B cell (primary cell): ENCODE measurements at regions of chr19 and their contacts with region 1.

Region 1: DNA sequence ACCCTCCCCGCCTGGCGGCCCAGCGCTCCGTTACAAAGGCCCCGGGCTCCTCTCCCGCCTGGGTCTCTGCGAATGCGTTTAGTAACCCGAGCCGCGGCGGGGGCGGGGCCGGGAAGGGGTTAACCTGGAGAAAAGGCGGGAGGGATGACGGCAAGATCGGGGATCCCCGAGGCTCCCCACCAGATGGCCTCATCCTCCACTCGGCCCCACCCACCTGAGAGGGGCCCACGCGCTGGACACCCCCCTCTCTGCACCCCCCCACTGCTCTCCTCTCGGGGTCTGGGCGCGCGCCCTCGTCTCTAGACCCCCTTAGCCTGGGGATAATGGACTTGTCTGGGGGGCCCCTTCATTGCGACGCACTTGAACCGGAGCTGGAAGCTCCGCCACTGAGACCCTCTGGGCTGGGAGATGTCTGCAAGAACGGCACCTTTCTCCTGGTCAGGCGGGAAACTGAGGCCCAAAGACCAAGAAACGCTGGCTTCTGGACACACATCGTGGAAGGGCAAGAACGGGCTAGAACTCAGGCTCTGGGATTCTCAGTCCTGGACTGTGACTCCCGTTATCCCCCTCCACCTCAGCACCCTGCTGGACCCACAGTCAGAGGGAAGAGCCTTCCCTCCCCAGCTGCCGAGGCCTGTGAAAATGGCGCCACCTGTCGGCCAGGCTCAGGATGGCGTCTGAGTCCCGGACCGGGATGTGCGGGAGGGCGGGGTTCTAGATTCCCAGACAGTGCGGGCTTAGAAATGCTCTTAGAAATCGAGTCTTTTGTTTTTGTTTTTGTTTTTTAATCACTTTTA is 2.9 kb upstream of the LTBP4 start:
- DNase-seq: peak; percentile 87
- ATAC-seq: peak; percentile 60
- H3K4me3 ChIP-seq: no peak overlapping the region
- H3K4me3 Mint-ChIP-seq: peak overlapping the region; percentile 61
- H3K27ac ChIP-seq: no peak overlapping the region
- H3K27ac Mint-ChIP-seq: peak overlapping the region; percentile 32
- H3K4me1 ChIP-seq: peaks cover 59 to 65% of the 10 kb centered on the region in 2 donors
- H3K4me1 Mint-ChIP-seq: peaks cover 45% of the 10 kb centered on the region
- H3K27me3 ChIP-seq: peaks cover 0 to 69% (median 40%) of the 10 kb centered on the region in 4 experiments
- H3K27me3 Mint-ChIP-seq: peaks cover 35% of the 10 kb centered on the region
- CTCF ChIP-seq: peak; percentile 98

Region 2: GRCh38 chr19:40285353-40286234 is 312.7 kb before region 1 on chr19:
- CTCF ChIA-PET with region 1: no interaction called
- POLR2A ChIA-PET with region 1: no interaction called
- intact Hi-C with region 1: no loop called
- DNase-seq: peak; percentile 100
- ATAC-seq: peak; percentile 74
- H3K4me3 ChIP-seq: peak overlapping the region in 4 of 5 experiments; percentile 68 to 89 (median 78)
- H3K4me3 Mint-ChIP-seq: peak overlapping the region; percentile 87
- H3K27ac ChIP-seq: peak overlapping the region; percentile 99 to 100
- H3K27ac Mint-ChIP-seq: peak overlapping the region; percentile 97
- H3K4me1 ChIP-seq: peaks cover 40 to 54% of the 10 kb centered on the region in 2 donors
- H3K4me1 Mint-ChIP-seq: peaks cover 53% of the 10 kb centered on the region
- H3K27me3 ChIP-seq: no peaks in the 10 kb centered on the region
- H3K27me3 Mint-ChIP-seq: no peaks in the 10 kb centered on the region
- CTCF ChIP-seq: no peak

Region 3: GRCh38 chr19:40305403-40305802 is 292.9 kb before region 1 on chr19:
- CTCF ChIA-PET with region 1: interaction called, 32 read pairs
- POLR2A ChIA-PET with region 1: no interaction called
- intact Hi-C with region 1: no loop called
- DNase-seq: peak; percentile 84
- ATAC-seq: peak; percentile 68
- H3K4me3 ChIP-seq: no peak overlapping the region
- H3K4me3 Mint-ChIP-seq: no peak overlapping the region
- H3K27ac ChIP-seq: no peak overlapping the region
- H3K27ac Mint-ChIP-seq: no peak overlapping the region
- H3K4me1 ChIP-seq: peaks cover 0 to 3% of the 10 kb centered on the region in 2 donors
- H3K4me1 Mint-ChIP-seq: peaks cover 2% of the 10 kb centered on the region
- H3K27me3 ChIP-seq: no peaks in the 10 kb centered on the region
- H3K27me3 Mint-ChIP-seq: no peaks in the 10 kb centered on the region
- CTCF ChIP-seq: peak; percentile 88

Region 4: GRCh38 chr19:40502647-40503319 is 95.5 kb before region 1 on chr19:
- CTCF ChIA-PET with region 1: no interaction called
- POLR2A ChIA-PET with region 1: no interaction called
- intact Hi-C with region 1: no loop called
- DNase-seq: no peak
- ATAC-seq: no peak
- H3K4me3 ChIP-seq: no peak overlapping the region
- H3K4me3 Mint-ChIP-seq: no peak overlapping the region
- H3K27ac ChIP-seq: no peak overlapping the region
- H3K27ac Mint-ChIP-seq: no peak overlapping the region
- H3K4me1 ChIP-seq: no peaks in the 10 kb centered on the region
- H3K4me1 Mint-ChIP-seq: no peaks in the 10 kb centered on the region
- H3K27me3 ChIP-seq: peaks cover 0 to 18% (median 2%) of the 10 kb centered on the region in 4 experiments
- H3K27me3 Mint-ChIP-seq: peaks cover 32% of the 10 kb centered on the region
- CTCF ChIP-seq: no peak

Region 5: DNA sequence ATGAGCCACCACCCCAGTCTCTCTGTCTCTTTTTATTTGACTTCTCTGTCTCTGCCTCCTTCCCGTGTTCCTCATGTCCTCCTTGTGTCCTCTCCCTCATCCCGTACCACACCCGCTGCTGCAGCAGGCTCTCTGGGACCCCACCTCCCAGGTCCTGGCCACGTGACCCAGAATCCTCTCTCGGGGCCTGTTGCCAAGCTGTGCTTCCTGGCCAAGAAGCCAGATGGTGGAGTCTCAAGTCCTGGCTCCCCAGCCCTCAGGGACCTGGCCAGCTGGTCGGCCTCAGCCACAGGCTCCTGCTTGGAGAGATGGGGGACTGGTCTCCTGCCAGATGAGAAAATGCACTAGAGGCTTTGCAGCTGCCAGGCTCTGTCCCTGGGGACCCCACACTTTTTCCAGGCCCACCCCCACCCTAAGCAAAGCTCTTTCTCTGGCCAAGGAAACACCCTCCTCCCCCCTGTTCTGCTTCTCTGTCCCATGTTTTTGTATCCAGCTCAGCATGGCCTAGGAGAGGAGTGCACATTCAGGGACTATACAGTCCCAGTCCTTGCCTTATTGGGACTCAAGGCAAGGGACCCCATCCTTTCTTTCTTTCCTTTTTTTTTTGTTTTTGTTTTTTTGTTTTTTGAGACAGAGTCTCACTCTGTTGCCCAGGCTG is 56.0 kb before region 1 on chr19:
- CTCF ChIA-PET with region 1: interaction called, 22 read pairs
- POLR2A ChIA-PET with region 1: no interaction called
- intact Hi-C with region 1: no loop called
- DNase-seq: no peak
- ATAC-seq: no peak
- H3K4me3 ChIP-seq: no peak overlapping the region
- H3K4me3 Mint-ChIP-seq: no peak overlapping the region
- H3K27ac ChIP-seq: no peak overlapping the region
- H3K27ac Mint-ChIP-seq: no peak overlapping the region
- H3K4me1 ChIP-seq: no peaks in the 10 kb centered on the region
- H3K4me1 Mint-ChIP-seq: no peaks in the 10 kb centered on the region
- H3K27me3 ChIP-seq: peaks cover 0 to 5% (median 3%) of the 10 kb centered on the region in 4 experiments
- H3K27me3 Mint-ChIP-seq: peaks cover 14% of the 10 kb centered on the region
- CTCF ChIP-seq: no peak

Region 6: GRCh38 chr19:40576585-40577451 is 21.5 kb before region 1 on chr19 and contains the start of gene SHKBP1:
- CTCF ChIA-PET with region 1: interaction called, 11 read pairs
- POLR2A ChIA-PET with region 1: interaction called, 19 read pairs
- intact Hi-C with region 1: loop called (anchors 1 kb)
- DNase-seq: peak; percentile 96
- ATAC-seq: peak; percentile 98
- H3K4me3 ChIP-seq: peak within 1 kb of the TSS; percentile 52 to 90 (median 88)
- H3K4me3 Mint-ChIP-seq: peak within 1 kb of the TSS; percentile 83
- H3K27ac ChIP-seq: peak within 1 kb of the TSS; percentile 68 to 77
- H3K27ac Mint-ChIP-seq: peak within 1 kb of the TSS; percentile 89
- H3K4me1 ChIP-seq: peaks cover 18 to 42% of the 10 kb centered on the region in 2 donors
- H3K4me1 Mint-ChIP-seq: peaks cover 34% of the 10 kb centered on the region
- H3K27me3 ChIP-seq: no peaks in the 10 kb centered on the region
- H3K27me3 Mint-ChIP-seq: no peaks in the 10 kb centered on the region
- CTCF ChIP-seq: no peak
- total RNA-seq, gene SHKBP1: 179 and 192 TPM in 2 replicates

Region 7: GRCh38 chr19:40623403-40624251 is 25.3 kb after region 1 on chr19:
- CTCF ChIA-PET with region 1: no interaction called
- POLR2A ChIA-PET with region 1: interaction called, 14 read pairs
- intact Hi-C with region 1: no loop called
- DNase-seq: no peak
- ATAC-seq: no peak
- H3K4me3 ChIP-seq: no peak overlapping the region
- H3K4me3 Mint-ChIP-seq: no peak overlapping the region
- H3K27ac ChIP-seq: no peak overlapping the region
- H3K27ac Mint-ChIP-seq: no peak overlapping the region
- H3K4me1 ChIP-seq: no peaks in the 10 kb centered on the region
- H3K4me1 Mint-ChIP-seq: peaks cover 2% of the 10 kb centered on the region
- H3K27me3 ChIP-seq: no peaks in the 10 kb centered on the region
- H3K27me3 Mint-ChIP-seq: no peaks in the 10 kb centered on the region
- CTCF ChIP-seq: no peak